Activated B cell treated with CpG ODN at 0.5 μM for 24 hours (primary cell): ENCODE measurements at regions of chr1 and their contacts with region 1.

Region 1: DNA sequence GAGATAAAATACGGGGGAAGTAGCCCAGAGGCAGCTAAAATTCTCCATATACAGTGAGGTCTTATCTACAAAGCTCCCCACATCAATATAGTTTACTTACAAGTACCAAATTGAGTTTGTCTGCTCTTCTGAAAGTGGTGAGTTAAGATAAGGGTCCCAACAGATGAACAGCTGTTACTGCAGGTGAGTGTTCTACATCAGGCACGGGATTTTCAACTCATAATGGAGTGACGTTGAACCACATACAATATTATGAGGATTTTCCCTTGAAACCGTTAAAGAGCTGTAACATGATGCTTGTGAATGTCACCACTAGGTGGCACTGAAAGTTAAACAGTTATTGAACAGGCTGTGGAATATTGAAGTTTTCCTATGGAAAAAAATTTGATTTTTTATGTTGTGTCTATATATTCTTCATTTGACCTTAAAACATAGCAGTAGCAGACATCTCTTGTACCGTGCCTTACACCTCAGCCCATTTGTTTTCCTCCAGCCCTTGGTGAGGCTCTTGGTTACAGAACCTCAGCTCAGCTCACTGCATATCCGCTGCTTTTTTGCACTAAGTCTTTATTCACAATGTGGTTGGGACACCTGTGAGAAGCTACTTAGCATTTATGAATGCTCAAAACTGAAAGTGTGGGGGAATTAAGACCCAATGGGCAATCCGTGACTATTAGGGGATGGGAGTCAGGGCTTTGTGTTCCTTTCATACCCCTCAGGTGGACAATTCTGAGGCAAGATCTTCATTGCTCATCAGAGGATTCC is 23.2 kb downstream of the CD1D start:
- DNase-seq: no peak
- ATAC-seq: peak; percentile 69
- H3K4me3 Mint-ChIP-seq: peak overlapping the region; percentile 49
- H3K27ac Mint-ChIP-seq: peak overlapping the region; percentile 41
- H3K4me1 Mint-ChIP-seq: peaks cover 23% of the 10 kb centered on the region
- H3K27me3 Mint-ChIP-seq: no peaks in the 10 kb centered on the region
- CTCF ChIP-seq: no peak

Region 2: DNA sequence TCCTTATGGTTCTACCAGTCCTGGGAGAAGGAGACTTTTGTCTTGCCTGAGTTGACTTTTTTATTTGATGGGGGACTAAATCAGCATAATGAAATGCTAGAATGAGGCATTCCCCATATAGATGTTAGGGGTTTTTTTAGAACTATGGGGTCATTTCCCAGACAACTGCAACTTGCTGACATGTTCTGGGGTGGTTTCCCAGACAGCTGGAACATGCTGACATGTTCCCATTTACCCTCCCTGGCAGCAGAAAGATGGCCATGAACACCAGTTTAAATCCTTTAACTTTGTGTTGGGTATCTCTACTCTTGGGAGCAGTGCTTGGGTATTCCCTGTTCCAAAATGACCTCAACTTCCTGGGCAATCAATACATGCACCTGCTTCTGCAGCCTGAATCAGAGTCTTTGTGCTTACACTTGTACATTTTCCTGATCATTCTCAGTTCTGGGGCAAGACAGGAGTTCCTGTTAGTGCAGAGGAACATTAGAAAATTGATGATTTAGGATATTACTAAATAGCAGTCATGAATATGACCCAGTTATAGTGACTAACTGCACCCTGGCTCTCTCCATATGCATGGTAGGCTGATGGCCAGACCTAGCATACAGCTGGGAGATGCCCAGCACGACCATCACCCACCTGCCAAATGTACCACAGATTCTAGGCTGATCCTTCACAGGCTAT is 286.8 kb before region 1 on chr1:
- CTCF ChIA-PET with region 1: no interaction called
- POLR2A ChIA-PET with region 1: no interaction called
- intact Hi-C with region 1: no loop called
- DNase-seq: no peak
- ATAC-seq: no peak
- H3K4me3 Mint-ChIP-seq: no peak overlapping the region
- H3K27ac Mint-ChIP-seq: no peak overlapping the region
- H3K4me1 Mint-ChIP-seq: peaks cover 12% of the 10 kb centered on the region
- H3K27me3 Mint-ChIP-seq: peaks cover 3% of the 10 kb centered on the region
- CTCF ChIP-seq: no peak

Region 3: GRCh38 chr1:157955857-157956256 is 248.0 kb before region 1 on chr1:
- CTCF ChIA-PET with region 1: no interaction called
- POLR2A ChIA-PET with region 1: no interaction called
- intact Hi-C with region 1: no loop called
- DNase-seq: no peak
- ATAC-seq: peak; percentile 62
- H3K4me3 Mint-ChIP-seq: peak overlapping the region; percentile 15
- H3K27ac Mint-ChIP-seq: no peak overlapping the region
- H3K4me1 Mint-ChIP-seq: peaks cover 24% of the 10 kb centered on the region
- H3K27me3 Mint-ChIP-seq: peaks cover 14% of the 10 kb centered on the region
- CTCF ChIP-seq: no peak

Region 4: DNA sequence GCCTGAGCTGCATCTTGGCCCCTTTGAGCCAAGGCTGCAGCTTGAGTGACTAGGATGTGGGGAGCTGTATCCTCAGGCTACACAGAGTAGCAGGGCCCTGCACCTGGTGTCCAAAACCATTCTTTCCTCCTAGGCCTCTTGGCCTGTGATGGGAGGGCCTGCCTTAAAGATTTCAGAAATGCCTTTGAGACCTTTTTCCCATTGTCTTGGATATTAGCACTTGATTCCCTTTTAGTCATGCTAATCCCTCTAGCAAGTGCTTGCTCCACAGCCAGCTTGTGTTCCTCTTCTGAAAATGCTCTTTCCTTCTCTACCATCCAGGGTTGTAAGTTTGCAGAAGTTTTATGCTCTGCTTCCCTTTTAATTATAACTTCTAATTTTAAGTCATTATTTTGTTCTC is 232.1 kb before region 1 on chr1:
- CTCF ChIA-PET with region 1: no interaction called
- POLR2A ChIA-PET with region 1: no interaction called
- intact Hi-C with region 1: no loop called
- DNase-seq: no peak
- ATAC-seq: no peak
- H3K4me3 Mint-ChIP-seq: no peak overlapping the region
- H3K27ac Mint-ChIP-seq: no peak overlapping the region
- H3K4me1 Mint-ChIP-seq: no peaks in the 10 kb centered on the region
- H3K27me3 Mint-ChIP-seq: peaks cover 6% of the 10 kb centered on the region
- CTCF ChIP-seq: no peak

Region 5: GRCh38 chr1:158163000-158163947 is 40.6 kb before region 1 on chr1:
- CTCF ChIA-PET with region 1: interaction called, 15 read pairs
- POLR2A ChIA-PET with region 1: interaction called, 6 read pairs
- intact Hi-C with region 1: no loop called
- DNase-seq: no peak
- ATAC-seq: peak; percentile 93
- H3K4me3 Mint-ChIP-seq: peak overlapping the region; percentile 68
- H3K27ac Mint-ChIP-seq: peak overlapping the region; percentile 74
- H3K4me1 Mint-ChIP-seq: peaks cover 57% of the 10 kb centered on the region
- H3K27me3 Mint-ChIP-seq: no peaks in the 10 kb centered on the region
- CTCF ChIP-seq: no peak

Region 6: GRCh38 chr1:158227904-158228623 is 24.2 kb after region 1 on chr1:
- CTCF ChIA-PET with region 1: interaction called, 10 read pairs
- POLR2A ChIA-PET with region 1: no interaction called
- intact Hi-C with region 1: no loop called
- DNase-seq: no peak
- ATAC-seq: no peak
- H3K4me3 Mint-ChIP-seq: no peak overlapping the region
- H3K27ac Mint-ChIP-seq: no peak overlapping the region
- H3K4me1 Mint-ChIP-seq: no peaks in the 10 kb centered on the region
- H3K27me3 Mint-ChIP-seq: peaks cover 7% of the 10 kb centered on the region
- CTCF ChIP-seq: no peak

Region 7: DNA sequence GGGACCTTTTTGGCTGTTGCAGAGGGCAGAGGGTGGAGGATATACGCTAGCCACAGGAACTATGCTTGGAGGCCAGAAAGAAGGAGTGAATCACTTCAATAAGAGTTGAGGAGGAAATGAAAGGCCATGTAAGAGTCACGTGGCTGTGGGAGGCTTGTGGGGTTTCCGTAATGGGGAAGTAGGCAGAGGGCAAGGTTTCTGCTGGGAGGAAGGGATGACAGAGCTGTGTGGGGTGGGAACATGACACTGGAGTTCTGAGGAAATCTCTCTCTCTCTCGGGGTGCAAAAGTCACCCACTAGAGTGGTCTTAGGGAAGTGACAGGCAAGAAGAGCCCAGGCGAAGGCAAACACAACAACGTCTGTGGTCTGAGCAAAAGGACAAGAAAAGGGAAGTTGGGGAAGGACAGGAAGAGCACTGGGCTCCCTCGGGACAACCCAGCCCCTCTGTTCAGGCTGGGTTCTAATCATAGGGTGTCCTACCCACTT is 81.9 kb after region 1 on chr1:
- CTCF ChIA-PET with region 1: interaction called, 19 read pairs
- POLR2A ChIA-PET with region 1: interaction called, 10 read pairs
- intact Hi-C with region 1: loop called (anchors 2 kb)
- DNase-seq: peak; percentile 68
- ATAC-seq: peak; percentile 73
- H3K4me3 Mint-ChIP-seq: peak overlapping the region; percentile 88
- H3K27ac Mint-ChIP-seq: peak overlapping the region; percentile 99
- H3K4me1 Mint-ChIP-seq: peaks cover 72% of the 10 kb centered on the region
- H3K27me3 Mint-ChIP-seq: no peaks in the 10 kb centered on the region
- CTCF ChIP-seq: no peak

Region 8: DNA sequence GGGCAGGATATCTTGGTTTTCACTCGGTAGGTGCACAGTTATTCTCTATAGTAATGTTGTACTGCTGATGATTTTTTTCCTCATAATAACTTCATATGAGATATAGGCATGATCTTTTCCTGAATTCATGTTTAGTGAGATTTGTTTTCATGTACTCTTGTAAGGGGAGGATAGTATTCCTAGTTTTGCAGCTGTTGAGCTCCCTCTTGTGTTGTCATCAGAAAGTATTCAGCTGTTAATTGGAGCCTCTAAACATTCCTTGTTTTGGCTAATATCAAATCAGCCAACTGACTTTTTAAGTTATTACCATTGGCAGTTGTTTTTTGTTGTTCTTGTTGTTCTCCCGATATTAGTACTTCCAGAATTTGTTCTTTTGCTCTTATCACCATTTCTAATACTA is 292.5 kb after region 1 on chr1:
- CTCF ChIA-PET with region 1: interaction called, 25 read pairs
- POLR2A ChIA-PET with region 1: no interaction called
- intact Hi-C with region 1: loop called (anchors 1 kb)
- DNase-seq: no peak
- ATAC-seq: no peak
- H3K4me3 Mint-ChIP-seq: no peak overlapping the region
- H3K27ac Mint-ChIP-seq: no peak overlapping the region
- H3K4me1 Mint-ChIP-seq: no peaks in the 10 kb centered on the region
- H3K27me3 Mint-ChIP-seq: peaks cover 7% of the 10 kb centered on the region
- CTCF ChIP-seq: no peak